Mammary epithelial cell (primary cell): ENCODE measurements at regions of chr1 and their contacts with region 1.

Region 1: GRCh38 chr1:14742181-14742980 is 143.9 kb downstream of the KAZN start:
- DNase-seq: peak; percentile 99
- H3K4me3 ChIP-seq: no peak overlapping the region
- H3K27ac ChIP-seq: peak overlapping the region; percentile 91
- H3K4me1 ChIP-seq: peaks cover 28% of the 10 kb centered on the region
- H3K27me3 ChIP-seq: no peaks in the 10 kb centered on the region
- CTCF ChIP-seq: no peak

Region 2: DNA sequence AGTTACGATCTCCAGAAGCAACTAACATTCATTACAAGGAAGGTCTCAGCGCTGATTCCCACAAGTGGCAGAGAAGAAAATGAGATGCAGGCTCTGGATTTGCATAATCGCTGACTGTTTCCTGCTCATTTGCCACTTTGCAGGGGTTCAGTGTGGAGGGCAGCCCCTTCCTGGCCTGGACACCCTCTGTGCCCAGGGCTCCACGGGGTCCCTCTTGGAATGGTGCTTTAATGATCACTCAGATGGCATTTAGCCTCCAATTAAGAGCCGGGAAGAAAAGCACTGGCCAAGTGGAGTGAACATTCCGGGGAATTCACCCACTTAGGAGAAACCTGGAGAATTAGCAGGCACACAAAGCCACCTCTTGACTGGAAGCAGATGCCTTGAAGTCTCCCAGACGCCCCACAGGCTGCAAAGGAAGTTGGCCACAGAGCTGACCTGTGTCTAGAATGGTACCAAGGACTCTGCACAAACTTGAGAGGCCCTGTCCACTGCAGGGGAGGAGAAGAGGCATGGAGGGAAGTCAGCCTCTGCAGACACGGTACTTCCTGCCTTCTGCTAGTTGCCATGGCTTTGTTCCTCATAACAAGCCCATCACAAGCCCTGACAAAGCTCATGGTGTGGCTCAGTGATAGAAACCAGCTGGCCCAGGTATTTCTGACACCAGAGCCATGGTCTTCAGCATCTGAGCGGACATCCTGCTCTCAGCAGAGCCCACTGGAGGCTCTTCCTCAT is 13.3 kb after region 1 on chr1:
- CTCF ChIA-PET with region 1: no interaction called
- dilution Hi-C with region 1: no loop called
- in situ Hi-C with region 1: no loop called
- intact Hi-C with region 1: loop called (anchors 2 kb)
- DNase-seq: peak; percentile 62
- H3K4me3 ChIP-seq: no peak overlapping the region
- H3K27ac ChIP-seq: peak overlapping the region; percentile 55
- H3K4me1 ChIP-seq: peaks cover 29% of the 10 kb centered on the region
- H3K27me3 ChIP-seq: no peaks in the 10 kb centered on the region
- CTCF ChIP-seq: no peak

Region 3: DNA sequence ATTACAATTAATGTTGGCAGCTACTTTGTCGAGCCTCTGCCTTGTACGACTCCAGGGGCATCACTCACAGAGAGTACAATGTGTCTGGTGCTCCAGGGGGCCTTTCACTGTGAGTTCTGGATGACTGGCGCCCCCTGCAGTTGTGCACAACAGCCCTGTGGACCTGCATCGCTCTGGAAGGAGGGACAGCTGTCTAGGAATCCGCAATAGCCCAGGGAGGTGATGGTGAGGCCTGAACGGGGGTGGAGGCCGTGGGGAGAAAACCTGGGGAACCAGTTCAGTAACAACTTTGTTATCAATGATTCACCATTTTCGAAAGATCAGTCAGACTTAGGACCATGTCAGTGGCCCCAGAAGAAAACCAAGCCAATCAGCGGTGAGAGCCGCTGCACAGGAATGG is 45.2 kb after region 1 on chr1:
- CTCF ChIA-PET with region 1: no interaction called
- dilution Hi-C with region 1: loop called (anchors 5 kb)
- in situ Hi-C with region 1: no loop called
- intact Hi-C with region 1: no loop called
- DNase-seq: peak; percentile 52
- H3K4me3 ChIP-seq: no peak overlapping the region
- H3K27ac ChIP-seq: no peak overlapping the region
- H3K4me1 ChIP-seq: peaks cover 7% of the 10 kb centered on the region
- H3K27me3 ChIP-seq: no peaks in the 10 kb centered on the region
- CTCF ChIP-seq: peak in 1 of 2 donors; percentile 25

Region 4: GRCh38 chr1:14826172-14826636 is 83.8 kb after region 1 on chr1:
- CTCF ChIA-PET with region 1: no interaction called
- dilution Hi-C with region 1: no loop called
- in situ Hi-C with region 1: no loop called
- intact Hi-C with region 1: no loop called
- DNase-seq: no peak
- H3K4me3 ChIP-seq: no peak overlapping the region
- H3K27ac ChIP-seq: no peak overlapping the region
- H3K4me1 ChIP-seq: no peaks in the 10 kb centered on the region
- H3K27me3 ChIP-seq: no peaks in the 10 kb centered on the region
- CTCF ChIP-seq: no peak